Activated CD4-positive, alpha-beta T cell treated with anti-CD3 and anti-CD28 coated beads, Interleukin-2, amount 10 ng/mL, durations not matched to agents 24 days and 14 days (primary cell): ENCODE measurements at regions of chr11 and their contacts with region 1.

Region 1: DNA sequence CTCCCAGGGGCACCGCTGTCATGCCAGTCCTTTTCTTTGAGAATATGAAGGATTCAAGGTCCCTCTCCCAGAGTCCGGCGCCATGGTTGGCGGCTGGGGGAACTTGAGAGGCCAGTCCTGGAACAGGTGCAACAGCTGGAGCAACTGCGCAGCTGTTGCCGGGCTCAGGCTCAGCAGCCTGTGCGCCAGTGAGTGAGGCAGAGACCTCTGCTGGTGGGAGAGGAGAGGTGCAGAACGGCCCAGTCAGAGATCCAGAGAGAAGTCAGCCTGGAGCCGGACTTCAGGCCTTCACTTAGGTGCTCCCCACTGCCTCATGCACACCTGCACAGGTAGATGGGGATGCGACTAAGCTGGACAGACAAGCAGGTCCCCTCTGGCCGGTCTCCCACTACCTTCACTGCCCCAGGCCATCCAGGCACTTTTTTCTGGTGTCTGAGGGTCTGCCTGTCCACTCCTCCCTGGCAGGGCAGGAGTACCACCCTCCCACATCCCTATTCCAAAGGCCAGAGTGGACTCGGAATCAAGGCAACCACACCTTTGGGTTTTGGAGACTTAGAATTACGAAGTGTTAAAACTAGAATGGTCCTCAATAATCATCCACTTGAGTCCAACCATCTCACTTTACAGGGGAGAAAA is 4.6 kb downstream of the CHRDL2 start:
- DNase-seq: peak; percentile 85
- H3K4me3 Mint-ChIP-seq: no peak overlapping the region
- H3K27ac Mint-ChIP-seq: no peak overlapping the region
- H3K4me1 Mint-ChIP-seq: no peaks in the 10 kb centered on the region
- H3K27me3 Mint-ChIP-seq: peaks cover 56% of the 10 kb centered on the region

Region 2: GRCh38 chr11:74611369-74611861 is 115.2 kb before region 1 on chr11:
- intact Hi-C with region 1: loop called (anchors 10 kb)
- DNase-seq: no peak
- H3K4me3 Mint-ChIP-seq: no peak overlapping the region
- H3K27ac Mint-ChIP-seq: no peak overlapping the region
- H3K4me1 Mint-ChIP-seq: peaks cover 2% of the 10 kb centered on the region
- H3K27me3 Mint-ChIP-seq: no peaks in the 10 kb centered on the region